MCF 10A (cell line): ENCODE measurements at regions of chr19 and their contacts with region 1.

Region 1: GRCh38 chr19:18594096-18594823 is 5.7 kb downstream of the REX1BD start:
- DNase-seq: peak; percentile 73
- H3K4me3 Mint-ChIP-seq: no peak overlapping the region
- H3K27ac Mint-ChIP-seq: no peak overlapping the region
- H3K4me1 Mint-ChIP-seq: peaks cover 17% of the 10 kb centered on the region
- H3K27me3 Mint-ChIP-seq: no peaks in the 10 kb centered on the region
- CTCF ChIP-seq: peak; percentile 93

Region 2: DNA sequence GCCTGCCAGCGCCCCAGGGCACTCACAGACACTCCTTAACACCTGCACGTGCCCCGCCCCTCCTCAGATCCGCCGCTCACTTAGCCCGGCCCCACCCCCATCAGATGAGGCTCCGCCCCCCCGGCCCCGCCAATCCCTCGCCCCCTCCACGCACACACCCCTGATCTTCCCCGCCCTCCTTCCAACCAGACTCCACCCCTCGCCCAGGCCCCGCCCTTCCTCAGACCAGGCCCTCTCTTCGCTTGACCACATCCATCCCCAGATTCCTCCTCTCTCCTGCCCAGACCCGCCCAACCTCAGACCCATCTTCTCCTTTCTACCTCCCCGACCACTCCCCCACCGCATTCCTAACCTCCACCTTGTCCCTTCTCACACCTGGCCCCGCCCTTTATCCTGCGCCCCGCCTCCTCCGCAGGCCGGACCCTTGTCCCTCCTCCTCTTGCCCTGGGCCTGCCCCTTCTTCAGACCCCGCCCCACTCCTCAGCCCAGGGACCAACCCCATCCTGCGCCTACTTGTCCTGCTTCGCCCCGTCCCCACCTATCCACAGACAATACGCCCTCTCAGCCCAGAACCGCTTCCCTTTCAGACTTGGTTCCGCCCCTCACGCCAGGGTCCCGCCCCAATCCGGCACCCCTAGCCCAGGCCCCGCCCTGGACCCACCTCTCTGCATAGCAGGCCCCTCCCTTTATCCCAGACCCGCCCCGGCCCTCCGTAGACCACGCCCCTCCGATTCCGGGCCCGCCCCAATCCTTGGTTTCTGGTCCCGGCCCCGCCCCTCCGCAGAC is 42.1 kb after region 1 on chr19:
- CTCF ChIA-PET with region 1: interaction called, 4 read pairs
- POLR2A ChIA-PET with region 1: interaction called, 3 read pairs
- intact Hi-C with region 1: loop called (anchors 1 kb)
- DNase-seq: peak; percentile 97
- H3K4me3 Mint-ChIP-seq: peak overlapping the region; percentile 82
- H3K27ac Mint-ChIP-seq: peak overlapping the region; percentile 92
- H3K4me1 Mint-ChIP-seq: peaks cover 30% of the 10 kb centered on the region
- H3K27me3 Mint-ChIP-seq: no peaks in the 10 kb centered on the region
- CTCF ChIP-seq: no peak